ENCODE measurements at regions of chr5 and their contacts with region 1.

Region 1: GRCh38 chr5:56337715-56338319 is 104.7 kb upstream of the ANKRD55 start:
- DNase-seq: no peak
- ATAC-seq: no peak
- H3K4me3 ChIP-seq: no peak overlapping the region
- H3K4me3 Mint-ChIP-seq: no peak overlapping the region
- H3K27ac ChIP-seq: no peak overlapping the region
- H3K27ac Mint-ChIP-seq: no peak overlapping the region
- H3K4me1 ChIP-seq: no peaks in the 10 kb centered on the region
- H3K4me1 Mint-ChIP-seq: no peaks in the 10 kb centered on the region
- H3K27me3 ChIP-seq: no peaks in the 10 kb centered on the region
- H3K27me3 Mint-ChIP-seq: no peaks in the 10 kb centered on the region
- CTCF ChIP-seq: no peak

Region 2: GRCh38 chr5:56003179-56003578 is 334.6 kb before region 1 on chr5:
- CTCF ChIA-PET with region 1: no interaction called
- POLR2A ChIA-PET with region 1: no interaction called
- intact Hi-C with region 1: no loop called
- DNase-seq: no peak
- ATAC-seq: no peak
- H3K4me3 ChIP-seq: no peak overlapping the region
- H3K4me3 Mint-ChIP-seq: no peak overlapping the region
- H3K27ac ChIP-seq: no peak overlapping the region
- H3K27ac Mint-ChIP-seq: no peak overlapping the region
- H3K4me1 ChIP-seq: peaks cover 13% of the 10 kb centered on the region
- H3K4me1 Mint-ChIP-seq: peaks cover 17% of the 10 kb centered on the region
- H3K27me3 ChIP-seq: no peaks in the 10 kb centered on the region
- H3K27me3 Mint-ChIP-seq: no peaks in the 10 kb centered on the region
- CTCF ChIP-seq: no peak

Region 3: GRCh38 chr5:56360816-56361215 is 23.0 kb after region 1 on chr5:
- CTCF ChIA-PET with region 1: no interaction called
- POLR2A ChIA-PET with region 1: no interaction called
- intact Hi-C with region 1: loop called in 1 of 2 experiments (anchors 1 kb)
- DNase-seq: no peak
- ATAC-seq: no peak
- H3K4me3 ChIP-seq: no peak overlapping the region
- H3K4me3 Mint-ChIP-seq: no peak overlapping the region
- H3K27ac ChIP-seq: no peak overlapping the region
- H3K27ac Mint-ChIP-seq: no peak overlapping the region
- H3K4me1 ChIP-seq: no peaks in the 10 kb centered on the region
- H3K4me1 Mint-ChIP-seq: peaks cover 3% of the 10 kb centered on the region
- H3K27me3 ChIP-seq: no peaks in the 10 kb centered on the region
- H3K27me3 Mint-ChIP-seq: no peaks in the 10 kb centered on the region
- CTCF ChIP-seq: no peak